ENCODE measurements at regions of chr16 and their contacts with region 1.

Region 1: DNA sequence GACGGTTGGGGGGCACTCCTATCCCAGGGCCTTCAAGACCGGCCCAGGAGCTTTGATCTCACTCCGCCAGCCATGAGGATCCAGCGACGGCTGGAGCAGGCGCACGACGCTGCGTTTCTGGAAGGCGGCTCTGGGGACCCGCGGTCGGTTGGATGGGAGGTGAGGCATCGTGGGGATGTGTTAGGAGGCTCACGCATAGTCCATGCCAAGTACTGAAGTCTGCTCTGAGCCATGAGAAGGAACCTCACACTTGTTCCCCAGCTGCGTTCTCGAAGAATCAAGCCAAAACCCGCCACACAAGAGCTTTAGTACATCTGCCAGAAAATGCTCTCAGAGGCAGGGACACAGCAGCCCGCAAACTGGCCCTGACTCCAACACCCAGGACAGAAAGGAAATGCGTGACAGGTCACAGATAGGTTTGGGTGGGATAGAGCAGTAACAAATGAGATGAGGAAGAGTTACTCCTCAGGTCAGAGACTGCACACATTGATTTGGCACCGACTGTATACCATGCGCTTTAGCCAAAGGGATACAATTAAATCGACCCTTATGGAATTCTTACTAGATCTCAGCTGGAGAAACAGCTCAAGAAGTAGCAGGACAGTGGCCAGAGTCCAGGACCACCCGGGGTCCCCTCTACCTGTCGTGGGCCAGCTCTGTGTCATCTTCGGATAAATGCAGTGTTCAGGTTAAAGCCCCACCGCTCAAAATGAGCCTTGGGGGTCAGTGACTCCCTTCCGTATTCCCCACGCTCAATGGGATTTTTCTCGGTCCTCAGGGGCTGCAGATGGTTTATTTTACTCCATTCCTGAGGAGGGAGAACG is 6.7 kb upstream of the GSG1L start:
- DNase-seq: no peak
- ATAC-seq: peak; percentile 10 to 35; a peak in 3 of 6 replicates
- H3K4me3 ChIP-seq: no peak overlapping the region
- H3K27ac ChIP-seq: no peak overlapping the region
- H3K4me1 ChIP-seq: no peaks in the 10 kb centered on the region
- CTCF ChIP-seq: no peak
- EP300 ChIP-seq: no peak
- POLR2A ChIP-seq: no peak
- RAD21 ChIP-seq: no peak

Region 2: GRCh38 chr16:27639561-27640276 is 430.5 kb before region 1 on chr16:
- CTCF ChIA-PET with region 1: interaction called, 13 read pairs
- POLR2A ChIA-PET with region 1: no interaction called
- DNase-seq: peak; percentile 53 to 57
- ATAC-seq: peak; percentile 80 to 93; a peak in 5 of 6 replicates
- H3K4me3 ChIP-seq: no peak overlapping the region
- H3K27ac ChIP-seq: no peak overlapping the region
- H3K4me1 ChIP-seq: no peaks in the 10 kb centered on the region
- CTCF ChIP-seq: peak; percentile 75
- EP300 ChIP-seq: no peak
- POLR2A ChIP-seq: no peak
- RAD21 ChIP-seq: peak; percentile 73 to 75

Region 3: DNA sequence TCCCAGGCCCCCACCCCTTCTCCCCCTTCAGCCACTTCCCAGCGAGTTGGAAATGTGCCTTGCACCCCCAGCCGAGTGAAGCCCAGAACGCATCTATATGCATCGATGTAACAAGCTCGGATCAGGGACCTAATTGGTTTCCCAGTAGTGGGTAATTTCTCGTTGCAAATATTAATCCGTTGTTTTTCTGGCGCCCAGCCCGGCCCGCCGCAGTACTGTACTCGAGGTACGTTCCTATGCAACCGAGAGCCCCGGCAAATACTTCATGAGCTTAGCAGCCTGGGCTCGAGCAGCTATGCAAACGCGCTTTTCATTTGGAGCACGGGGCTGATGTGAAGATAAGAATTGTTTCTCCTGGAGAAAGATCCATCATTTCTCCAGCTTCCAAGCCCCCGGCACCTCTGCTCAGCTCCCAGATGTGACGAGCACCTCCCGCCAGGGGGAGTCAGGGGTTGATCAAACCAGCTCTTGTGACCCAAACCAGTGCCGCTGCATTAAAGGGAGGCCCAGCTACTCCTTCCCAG is 290.5 kb before region 1 on chr16:
- CTCF ChIA-PET with region 1: interaction called, 17 read pairs
- POLR2A ChIA-PET with region 1: no interaction called
- DNase-seq: peak; percentile 33 to 47
- ATAC-seq: peak; percentile 37 to 73; a peak in 4 of 6 replicates
- H3K4me3 ChIP-seq: no peak overlapping the region
- H3K27ac ChIP-seq: no peak overlapping the region
- H3K4me1 ChIP-seq: no peaks in the 10 kb centered on the region
- CTCF ChIP-seq: no peak
- EP300 ChIP-seq: no peak
- POLR2A ChIP-seq: no peak
- RAD21 ChIP-seq: peak in 1 of 2 experiments; percentile 32; a peak in 1 of 5 replicates

Region 4: GRCh38 chr16:27980919-27981700 is 89.1 kb before region 1 on chr16:
- CTCF ChIA-PET with region 1: interaction called, 15 read pairs
- POLR2A ChIA-PET with region 1: no interaction called
- DNase-seq: no peak
- ATAC-seq: peak in 1 of 2 experiments; percentile 44; a peak in 1 of 6 replicates
- H3K4me3 ChIP-seq: no peak overlapping the region
- H3K27ac ChIP-seq: no peak overlapping the region
- H3K4me1 ChIP-seq: no peaks in the 10 kb centered on the region
- CTCF ChIP-seq: no peak
- EP300 ChIP-seq: no peak
- POLR2A ChIP-seq: no peak
- RAD21 ChIP-seq: no peak

Region 5: DNA sequence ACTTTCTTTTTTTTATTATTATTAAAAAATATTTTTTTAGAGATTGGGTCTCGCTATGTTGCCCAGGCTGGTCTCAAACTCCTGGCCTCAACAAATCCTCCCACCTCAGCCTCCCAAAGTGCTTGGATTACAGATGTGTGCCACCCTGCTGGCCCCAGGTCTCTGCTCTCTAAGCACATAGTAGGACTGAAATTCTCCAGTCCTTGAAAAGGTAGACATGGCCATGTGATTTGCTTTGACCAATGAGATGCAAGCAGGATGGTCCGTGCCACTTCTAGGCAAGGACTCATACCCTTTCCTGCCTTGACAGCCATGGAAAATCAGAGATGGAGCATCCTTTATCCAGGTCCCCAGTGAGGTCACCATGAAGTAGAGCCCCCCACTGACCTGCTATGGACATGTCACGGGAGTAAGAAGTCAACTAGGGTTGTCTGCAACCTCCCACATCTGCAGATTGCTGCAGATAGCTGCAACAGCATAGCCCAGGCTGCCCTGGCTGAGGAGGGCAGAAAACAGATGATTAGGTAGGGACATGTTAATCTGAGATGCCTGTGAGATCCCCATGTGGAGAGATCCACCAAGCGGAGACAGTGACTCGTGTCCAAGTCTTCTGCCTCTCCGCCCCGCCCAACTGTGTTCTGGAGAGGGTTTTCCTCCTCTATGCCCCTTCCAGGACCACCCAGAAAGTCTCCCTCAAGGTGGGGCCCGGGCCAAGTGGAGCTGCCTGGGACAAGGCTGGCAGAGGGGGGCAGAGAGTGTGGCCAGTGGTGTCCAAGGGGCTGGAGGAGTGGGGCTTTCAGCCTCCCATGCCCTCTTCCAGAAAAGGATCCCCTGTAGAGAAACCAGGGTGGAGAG is 17.7 kb before region 1 on chr16:
- CTCF ChIA-PET with region 1: interaction called, 16 read pairs
- POLR2A ChIA-PET with region 1: no interaction called
- DNase-seq: no peak
- ATAC-seq: peak in 1 of 2 experiments; percentile 36; a peak in 2 of 6 replicates
- H3K4me3 ChIP-seq: no peak overlapping the region
- H3K27ac ChIP-seq: no peak overlapping the region
- H3K4me1 ChIP-seq: no peaks in the 10 kb centered on the region
- CTCF ChIP-seq: no peak
- EP300 ChIP-seq: no peak
- POLR2A ChIP-seq: no peak
- RAD21 ChIP-seq: no peak

Region 6: GRCh38 chr16:28082624-28083023 is 12.4 kb after region 1 on chr16:
- CTCF ChIA-PET with region 1: interaction called, 26 read pairs
- POLR2A ChIA-PET with region 1: no interaction called
- DNase-seq: no peak
- ATAC-seq: no peak
- H3K4me3 ChIP-seq: no peak overlapping the region
- H3K27ac ChIP-seq: no peak overlapping the region
- H3K4me1 ChIP-seq: no peaks in the 10 kb centered on the region
- CTCF ChIP-seq: no peak
- EP300 ChIP-seq: no peak
- POLR2A ChIP-seq: no peak
- RAD21 ChIP-seq: no peak

Region 7: GRCh38 chr16:28090646-28091377 is 20.6 kb after region 1 on chr16:
- CTCF ChIA-PET with region 1: interaction called, 15 read pairs
- POLR2A ChIA-PET with region 1: no interaction called
- DNase-seq: no peak
- ATAC-seq: peak in 1 of 2 experiments; percentile 9; a peak in 1 of 6 replicates
- H3K4me3 ChIP-seq: no peak overlapping the region
- H3K27ac ChIP-seq: no peak overlapping the region
- H3K4me1 ChIP-seq: no peaks in the 10 kb centered on the region
- CTCF ChIP-seq: no peak
- EP300 ChIP-seq: no peak
- POLR2A ChIP-seq: no peak
- RAD21 ChIP-seq: no peak

Measured in A549 (cell line).